A549 (cell line): ENCODE measurements at regions of chr4 and their contacts with region 1.

Region 1: GRCh38 chr4:74370912-74371311 is 6.0 kb downstream of the EREG start:
- DNase-seq: peak; percentile 20 to 78
- ATAC-seq: peak; percentile 62 to 69; a peak in 5 of 6 replicates
- H3K4me3 ChIP-seq: peak overlapping the region; percentile 15; the same call in 1 of the 3 replicates
- H3K27ac ChIP-seq: peak overlapping the region; percentile 79 to 81
- H3K4me1 ChIP-seq: peaks cover 67% of the 10 kb centered on the region
- CTCF ChIP-seq: peak; percentile 60
- EP300 ChIP-seq: no peak
- POLR2A ChIP-seq: no peak
- RAD21 ChIP-seq: peak; percentile 67 to 72

Region 2: GRCh38 chr4:74357994-74358393 is 12.9 kb before region 1 on chr4:
- CTCF ChIA-PET with region 1: no interaction called
- POLR2A ChIA-PET with region 1: no interaction called
- DNase-seq: no peak
- ATAC-seq: no peak
- H3K4me3 ChIP-seq: no peak overlapping the region
- H3K27ac ChIP-seq: no peak overlapping the region
- H3K4me1 ChIP-seq: peaks cover 25% of the 10 kb centered on the region; the same call in 2 of the 3 replicates
- CTCF ChIP-seq: no peak
- EP300 ChIP-seq: no peak
- POLR2A ChIP-seq: no peak
- RAD21 ChIP-seq: no peak

Region 3: DNA sequence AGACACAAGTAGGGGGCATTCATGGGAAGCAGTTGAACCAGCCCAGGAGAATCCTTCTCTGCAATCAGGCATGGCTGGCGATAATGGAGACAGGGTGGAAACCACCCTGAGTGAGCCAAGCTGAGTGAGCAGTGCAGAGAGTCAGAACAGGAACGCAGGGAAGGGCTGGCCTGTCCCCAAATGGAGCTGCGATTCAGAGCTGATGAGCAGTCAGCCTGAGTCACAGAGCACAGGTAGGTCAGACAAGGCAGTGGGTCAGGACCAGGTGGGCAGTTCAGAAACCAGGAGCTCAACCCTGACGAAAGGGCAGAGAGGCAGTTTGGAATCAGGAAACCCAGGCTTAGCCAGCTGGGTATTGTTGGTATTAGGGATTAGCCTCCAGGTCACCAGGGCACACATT is 294.5 kb after region 1 on chr4:
- CTCF ChIA-PET with region 1: interaction called, 11 read pairs
- POLR2A ChIA-PET with region 1: no interaction called
- DNase-seq: no peak
- ATAC-seq: peak in 1 of 2 experiments; percentile 63; a peak in 3 of 6 replicates
- H3K4me3 ChIP-seq: no peak overlapping the region
- H3K27ac ChIP-seq: peak overlapping the region; percentile 97 to 100
- H3K4me1 ChIP-seq: peaks cover 44% of the 10 kb centered on the region
- CTCF ChIP-seq: no peak
- EP300 ChIP-seq: no peak
- POLR2A ChIP-seq: no peak
- RAD21 ChIP-seq: no peak

Region 4: GRCh38 chr4:74675673-74676279 is 304.9 kb after region 1 on chr4:
- CTCF ChIA-PET with region 1: interaction called, 63 read pairs
- POLR2A ChIA-PET with region 1: no interaction called
- DNase-seq: peak; percentile 18 to 80
- ATAC-seq: peak; percentile 78 to 90
- H3K4me3 ChIP-seq: no peak overlapping the region
- H3K27ac ChIP-seq: peak overlapping the region; percentile 32 to 71; a peak in 5 of 6 replicates
- H3K4me1 ChIP-seq: peaks cover 8% of the 10 kb centered on the region; the same call in 2 of the 3 replicates
- CTCF ChIP-seq: peak; percentile 82
- EP300 ChIP-seq: no peak
- POLR2A ChIP-seq: no peak
- RAD21 ChIP-seq: peak; percentile 85 to 94